Activated B cell treated with CpG ODN at 0.5 μM for 24 hours (primary cell): ENCODE measurements at regions of chr10 and their contacts with region 1.

Region 1: DNA sequence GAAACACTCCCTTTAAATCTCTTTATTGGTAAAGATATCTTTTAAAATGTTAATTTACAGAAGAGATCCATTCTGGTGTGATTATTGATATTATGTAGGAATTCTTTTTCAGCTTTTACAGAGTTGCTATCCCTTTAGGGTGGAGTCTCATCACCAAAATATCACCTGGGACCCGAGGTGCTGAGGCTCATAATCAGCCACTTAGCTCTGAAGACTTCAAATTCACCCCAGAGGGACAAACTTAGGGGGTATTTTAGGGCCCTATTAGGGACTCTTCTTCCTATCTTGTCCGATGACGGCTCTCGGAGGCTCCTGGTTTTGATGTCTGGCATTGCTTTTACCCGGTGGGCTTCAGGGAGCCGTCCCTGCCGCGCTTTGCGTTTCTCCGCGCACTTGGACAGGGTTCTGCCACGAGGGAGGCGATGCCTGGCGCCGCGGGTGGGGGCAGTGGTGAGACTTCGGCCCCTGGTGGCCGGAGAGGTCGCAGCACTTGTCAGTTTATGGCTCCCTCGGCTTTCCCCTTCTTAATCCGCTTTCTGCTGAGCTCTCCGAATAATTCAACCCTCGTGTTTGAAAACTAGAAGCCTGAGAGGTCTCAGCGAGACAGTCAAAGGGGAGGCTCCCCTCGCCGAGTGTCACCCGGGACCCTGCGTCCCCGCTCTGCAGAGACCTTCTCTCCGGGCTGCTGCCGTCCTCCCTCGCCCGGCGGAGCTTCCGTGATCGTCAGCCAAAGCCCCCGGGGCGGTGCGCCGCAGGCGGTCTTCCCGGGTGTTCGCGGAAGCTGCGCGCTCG is 27.8 kb downstream of the RBM20 start:
- DNase-seq: peak; percentile 72
- ATAC-seq: peak; percentile 97
- H3K4me3 Mint-ChIP-seq: peak overlapping the region; percentile 90
- H3K27ac Mint-ChIP-seq: peak overlapping the region; percentile 88
- H3K4me1 Mint-ChIP-seq: peaks cover 4% of the 10 kb centered on the region
- H3K27me3 Mint-ChIP-seq: peaks cover 17% of the 10 kb centered on the region
- CTCF ChIP-seq: peak; percentile 52

Region 2: GRCh38 chr10:110368002-110368401 is 304.0 kb before region 1 on chr10:
- CTCF ChIA-PET with region 1: no interaction called
- POLR2A ChIA-PET with region 1: no interaction called
- intact Hi-C with region 1: no loop called
- DNase-seq: no peak
- ATAC-seq: peak; percentile 71
- H3K4me3 Mint-ChIP-seq: peak overlapping the region; percentile 50
- H3K27ac Mint-ChIP-seq: peak overlapping the region; percentile 77
- H3K4me1 Mint-ChIP-seq: peaks cover 42% of the 10 kb centered on the region
- H3K27me3 Mint-ChIP-seq: no peaks in the 10 kb centered on the region
- CTCF ChIP-seq: no peak

Region 3: DNA sequence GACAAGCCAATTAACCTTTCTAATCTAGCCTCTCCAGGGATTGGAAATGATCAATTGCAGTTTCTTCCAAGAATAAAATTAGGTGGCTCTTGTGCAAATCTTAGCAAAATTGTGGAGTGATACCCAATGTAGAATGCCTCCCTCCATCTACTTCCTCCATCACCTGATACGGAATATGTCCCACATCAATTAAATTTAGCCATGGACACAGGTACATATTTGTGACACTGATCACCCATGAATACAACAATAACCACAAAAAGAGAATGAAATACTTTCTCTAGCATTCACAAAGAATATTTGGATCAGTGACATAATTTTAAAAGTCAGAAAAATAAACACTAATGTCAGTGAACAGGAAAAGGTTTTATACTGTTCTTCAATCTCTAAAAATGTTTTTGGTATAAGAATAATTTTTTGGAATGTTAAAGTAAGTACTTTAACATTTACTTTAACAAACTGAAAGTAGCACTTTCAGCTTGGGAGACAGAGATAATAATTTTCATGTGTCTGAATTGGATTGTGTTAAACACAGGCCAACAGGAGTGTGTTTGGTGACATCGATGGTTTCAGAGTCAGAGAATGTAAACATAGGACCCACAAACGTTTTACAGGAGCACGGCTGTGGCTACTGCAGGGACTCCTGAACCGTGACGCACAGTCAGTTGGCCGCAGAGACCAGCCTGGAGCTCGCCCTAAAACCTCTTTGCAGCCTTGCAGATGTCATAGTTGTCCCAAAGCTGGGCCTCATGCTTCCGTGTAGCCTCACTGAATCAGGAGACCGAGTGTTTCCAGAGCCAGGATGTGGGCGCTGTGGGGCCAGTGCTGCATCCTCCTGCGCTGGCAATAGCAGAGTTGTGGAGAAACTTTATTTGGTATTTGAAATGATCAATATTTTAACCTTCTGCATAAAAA is 20.7 kb before region 1 on chr10:
- CTCF ChIA-PET with region 1: interaction called, 10 read pairs
- POLR2A ChIA-PET with region 1: interaction called, 3 read pairs
- intact Hi-C with region 1: loop called (anchors 2 kb)
- DNase-seq: no peak
- ATAC-seq: no peak
- H3K4me3 Mint-ChIP-seq: no peak overlapping the region
- H3K27ac Mint-ChIP-seq: no peak overlapping the region
- H3K4me1 Mint-ChIP-seq: peaks cover 29% of the 10 kb centered on the region
- H3K27me3 Mint-ChIP-seq: peaks cover 24% of the 10 kb centered on the region
- CTCF ChIP-seq: no peak

Region 4: GRCh38 chr10:110659558-110659957 is 12.4 kb before region 1 on chr10:
- CTCF ChIA-PET with region 1: interaction called, 10 read pairs
- POLR2A ChIA-PET with region 1: no interaction called
- intact Hi-C with region 1: no loop called
- DNase-seq: no peak
- ATAC-seq: no peak
- H3K4me3 Mint-ChIP-seq: no peak overlapping the region
- H3K27ac Mint-ChIP-seq: no peak overlapping the region
- H3K4me1 Mint-ChIP-seq: no peaks in the 10 kb centered on the region
- H3K27me3 Mint-ChIP-seq: peaks cover 9% of the 10 kb centered on the region
- CTCF ChIP-seq: no peak

Region 5: DNA sequence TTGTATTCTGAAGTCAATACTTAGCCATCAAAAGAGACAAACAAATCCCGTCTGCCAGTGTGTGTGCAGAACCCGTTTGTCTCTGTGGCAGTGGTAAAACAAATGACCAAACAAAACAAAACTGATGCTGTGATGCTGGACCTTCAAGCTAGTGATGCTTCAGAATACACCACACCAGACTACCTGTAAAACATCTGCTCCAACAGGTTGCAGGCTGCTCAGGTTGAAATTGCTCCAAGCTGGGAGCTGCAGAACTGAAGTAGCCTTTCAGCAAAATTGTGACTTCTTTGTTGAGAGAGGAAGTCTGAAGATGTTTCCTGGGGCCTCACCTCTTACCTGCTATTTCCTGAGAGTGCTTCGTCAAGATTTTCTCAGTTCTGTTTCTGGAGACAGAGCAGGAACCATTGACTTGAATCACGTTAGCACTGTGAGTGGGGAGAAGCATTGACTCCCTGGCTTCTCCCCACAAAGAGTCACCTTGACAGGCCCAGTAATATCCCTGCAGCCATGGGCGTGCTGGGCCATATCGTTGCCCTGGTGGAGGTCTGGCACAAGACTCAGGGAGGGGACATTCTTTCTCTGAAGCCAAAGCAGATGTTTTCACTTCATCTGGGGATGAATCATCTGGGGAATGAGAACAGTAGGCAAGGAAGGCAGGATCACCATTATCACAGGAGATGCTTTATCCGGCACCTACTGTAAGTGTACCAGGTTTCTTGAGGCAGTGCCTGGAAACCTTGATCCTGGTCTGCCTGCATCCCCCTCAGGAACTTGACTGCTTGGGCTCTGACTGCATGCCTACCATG is 52.3 kb after region 1 on chr10:
- CTCF ChIA-PET with region 1: no interaction called
- POLR2A ChIA-PET with region 1: no interaction called
- intact Hi-C with region 1: loop called (anchors 2 kb)
- DNase-seq: no peak
- ATAC-seq: peak; percentile 64
- H3K4me3 Mint-ChIP-seq: peak overlapping the region; percentile 64
- H3K27ac Mint-ChIP-seq: peak overlapping the region; percentile 56
- H3K4me1 Mint-ChIP-seq: peaks cover 38% of the 10 kb centered on the region
- H3K27me3 Mint-ChIP-seq: peaks cover 2% of the 10 kb centered on the region
- CTCF ChIP-seq: no peak

Region 6: DNA sequence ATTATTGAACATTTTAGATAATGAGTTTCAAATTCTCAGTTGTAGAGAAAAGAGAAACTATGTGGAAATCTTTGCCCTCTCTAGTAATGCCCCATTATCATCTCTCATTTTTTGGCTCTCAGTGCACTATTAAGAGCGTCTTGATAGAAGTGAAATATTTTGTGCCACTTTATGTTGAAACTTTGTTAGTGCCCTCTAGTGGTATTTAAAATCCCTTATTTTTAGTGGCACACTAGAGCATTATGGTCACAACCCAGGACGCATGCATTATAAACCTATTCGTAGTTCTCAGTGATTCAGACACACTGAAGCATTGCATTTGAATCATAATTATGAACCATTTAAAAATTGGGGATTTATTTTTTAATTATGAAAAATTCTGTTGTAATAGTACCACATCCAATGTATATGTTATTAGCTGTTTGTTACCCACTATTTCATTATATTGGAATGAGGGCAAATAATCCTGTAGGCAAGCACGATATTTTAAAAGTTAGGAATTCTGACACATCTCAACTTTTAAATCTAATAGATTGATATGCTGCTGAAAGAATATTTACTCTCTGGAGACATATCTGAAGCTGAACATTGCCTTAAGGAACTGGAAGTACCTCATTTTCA is 221.7 kb after region 1 on chr10:
- CTCF ChIA-PET with region 1: no interaction called
- POLR2A ChIA-PET with region 1: no interaction called
- intact Hi-C with region 1: loop called (anchors 5 kb)
- DNase-seq: no peak
- ATAC-seq: peak; percentile 93
- H3K4me3 Mint-ChIP-seq: no peak overlapping the region
- H3K27ac Mint-ChIP-seq: no peak overlapping the region
- H3K4me1 Mint-ChIP-seq: peaks cover 22% of the 10 kb centered on the region
- H3K27me3 Mint-ChIP-seq: no peaks in the 10 kb centered on the region
- CTCF ChIP-seq: no peak